ENCODE measurements at regions of chr21 and their contacts with region 1.

Region 1: DNA sequence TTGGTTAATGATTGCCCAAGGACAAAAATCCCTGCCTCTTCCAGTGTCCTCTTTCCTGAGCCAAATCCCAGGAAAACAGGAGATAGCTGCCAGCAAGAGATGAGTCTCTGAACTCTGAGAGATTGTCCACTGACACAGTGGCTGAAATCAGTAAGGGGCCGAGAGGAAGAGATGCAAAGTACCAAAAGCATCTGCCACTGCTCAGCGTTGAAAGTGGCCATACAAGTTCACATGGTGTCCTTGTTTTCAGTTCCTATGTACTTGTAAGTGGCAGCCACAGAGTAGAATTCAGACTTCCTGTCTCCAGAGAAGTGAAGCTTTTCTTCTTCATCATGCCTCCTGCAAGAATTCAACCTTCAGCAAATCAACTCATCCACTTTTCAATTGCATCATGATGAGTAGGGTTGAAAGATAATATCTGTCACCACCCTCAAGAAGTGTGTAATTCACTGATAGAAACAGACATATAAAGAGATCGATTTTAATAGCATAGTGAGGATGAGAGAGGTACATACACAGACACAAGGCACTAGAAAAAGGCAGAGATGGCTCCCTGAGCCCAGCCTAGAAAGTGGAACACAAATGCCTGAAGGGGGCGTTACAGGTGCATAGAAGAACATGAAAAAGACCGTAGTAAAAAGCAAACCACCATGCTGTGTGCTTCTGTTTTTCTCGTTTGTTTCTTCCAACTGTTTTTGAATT is 185.8 kb downstream of the MRPL39 start:
- DNase-seq: no peak
- ATAC-seq: peak; percentile 81
- H3K4me3 Mint-ChIP-seq: peak overlapping the region; percentile 68
- H3K27ac Mint-ChIP-seq: peak overlapping the region; percentile 91
- H3K4me1 Mint-ChIP-seq: peaks cover 63% of the 10 kb centered on the region
- H3K27me3 Mint-ChIP-seq: no peaks in the 10 kb centered on the region
- CTCF ChIP-seq: peak; percentile 65

Region 2: GRCh38 chr21:25024639-25025038 is 396.8 kb before region 1 on chr21:
- CTCF ChIA-PET with region 1: no interaction called
- POLR2A ChIA-PET with region 1: no interaction called
- intact Hi-C with region 1: no loop called
- DNase-seq: no peak
- ATAC-seq: no peak
- H3K4me3 Mint-ChIP-seq: no peak overlapping the region
- H3K27ac Mint-ChIP-seq: no peak overlapping the region
- H3K4me1 Mint-ChIP-seq: no peaks in the 10 kb centered on the region
- H3K27me3 Mint-ChIP-seq: no peaks in the 10 kb centered on the region
- CTCF ChIP-seq: no peak

Region 3: GRCh38 chr21:25188677-25189079 is 232.8 kb before region 1 on chr21:
- CTCF ChIA-PET with region 1: no interaction called
- POLR2A ChIA-PET with region 1: no interaction called
- intact Hi-C with region 1: loop called (anchors 1 kb)
- DNase-seq: no peak
- ATAC-seq: peak; percentile 72
- H3K4me3 Mint-ChIP-seq: peak overlapping the region; percentile 44
- H3K27ac Mint-ChIP-seq: peak overlapping the region; percentile 73
- H3K4me1 Mint-ChIP-seq: peaks cover 68% of the 10 kb centered on the region
- H3K27me3 Mint-ChIP-seq: no peaks in the 10 kb centered on the region
- CTCF ChIP-seq: no peak

Region 4: GRCh38 chr21:25350056-25350455 is 71.4 kb before region 1 on chr21:
- CTCF ChIA-PET with region 1: no interaction called
- POLR2A ChIA-PET with region 1: no interaction called
- intact Hi-C with region 1: no loop called
- DNase-seq: no peak
- ATAC-seq: no peak
- H3K4me3 Mint-ChIP-seq: no peak overlapping the region
- H3K27ac Mint-ChIP-seq: no peak overlapping the region
- H3K4me1 Mint-ChIP-seq: peaks cover 4% of the 10 kb centered on the region
- H3K27me3 Mint-ChIP-seq: no peaks in the 10 kb centered on the region
- CTCF ChIP-seq: no peak

Region 5: GRCh38 chr21:25487046-25487594 is 65.6 kb after region 1 on chr21:
- CTCF ChIA-PET with region 1: interaction called, 3 read pairs
- POLR2A ChIA-PET with region 1: interaction called, 28 read pairs
- intact Hi-C with region 1: loop called (anchors 1 kb)
- DNase-seq: no peak
- ATAC-seq: peak; percentile 85
- H3K4me3 Mint-ChIP-seq: peak overlapping the region; percentile 49
- H3K27ac Mint-ChIP-seq: peak overlapping the region; percentile 90
- H3K4me1 Mint-ChIP-seq: peaks cover 73% of the 10 kb centered on the region
- H3K27me3 Mint-ChIP-seq: no peaks in the 10 kb centered on the region
- CTCF ChIP-seq: no peak

Region 6: GRCh38 chr21:25568246-25568645 is 146.8 kb after region 1 on chr21:
- CTCF ChIA-PET with region 1: interaction called, 18 read pairs
- POLR2A ChIA-PET with region 1: interaction called, 157 read pairs
- intact Hi-C with region 1: loop called (anchors 1 kb)
- DNase-seq: no peak
- ATAC-seq: no peak
- H3K4me3 Mint-ChIP-seq: peak overlapping the region; percentile 73
- H3K27ac Mint-ChIP-seq: peak overlapping the region; percentile 59
- H3K4me1 Mint-ChIP-seq: peaks cover 91% of the 10 kb centered on the region
- H3K27me3 Mint-ChIP-seq: no peaks in the 10 kb centered on the region
- CTCF ChIP-seq: no peak

Region 7: GRCh38 chr21:25607151-25608043 is 185.9 kb after region 1 on chr21 and contains the start of gene MRPL39:
- CTCF ChIA-PET with region 1: interaction called, 7 read pairs
- POLR2A ChIA-PET with region 1: interaction called, 5 read pairs
- intact Hi-C with region 1: loop called (anchors 1 kb)
- DNase-seq: peak; percentile 85
- ATAC-seq: peak; percentile 89
- H3K4me3 Mint-ChIP-seq: peak within 1 kb of the TSS; percentile 100
- H3K27ac Mint-ChIP-seq: peak within 1 kb of the TSS; percentile 99
- H3K4me1 Mint-ChIP-seq: peaks cover 35% of the 10 kb centered on the region
- H3K27me3 Mint-ChIP-seq: no peaks in the 10 kb centered on the region
- CTCF ChIP-seq: no peak
- total RNA-seq, gene MRPL39: 43.6 and 46.3 TPM in 2 replicates

Region 8: DNA sequence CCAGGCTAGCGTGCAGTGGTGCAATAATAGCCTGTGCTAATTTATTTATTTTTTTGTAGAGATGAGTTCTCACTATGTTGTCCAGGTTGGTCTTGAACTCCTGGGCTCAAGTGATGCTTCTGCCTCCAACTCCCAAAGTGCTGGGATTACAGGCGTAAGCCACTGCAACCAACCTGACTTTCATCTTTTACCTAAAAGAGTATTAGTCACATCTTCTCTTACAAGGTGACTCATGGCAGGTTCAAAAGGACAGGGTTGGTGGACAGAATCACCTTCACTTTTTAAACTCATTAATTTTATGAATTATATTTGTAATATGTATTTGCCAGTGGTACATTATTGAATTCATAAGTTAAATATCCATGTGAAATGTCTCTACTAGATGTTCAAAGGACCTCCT is 235.7 kb after region 1 on chr21:
- CTCF ChIA-PET with region 1: no interaction called
- POLR2A ChIA-PET with region 1: no interaction called
- intact Hi-C with region 1: no loop called
- DNase-seq: no peak
- ATAC-seq: no peak
- H3K4me3 Mint-ChIP-seq: no peak overlapping the region
- H3K27ac Mint-ChIP-seq: no peak overlapping the region
- H3K4me1 Mint-ChIP-seq: no peaks in the 10 kb centered on the region
- H3K27me3 Mint-ChIP-seq: no peaks in the 10 kb centered on the region
- CTCF ChIP-seq: no peak

Region 9: GRCh38 chr21:25734904-25735645 is 313.6 kb after region 1 on chr21 and contains the starts of genes ATP5PF and GABPA:
- CTCF ChIA-PET with region 1: interaction called, 3 read pairs
- POLR2A ChIA-PET with region 1: no interaction called
- intact Hi-C with region 1: loop called (anchors 1 kb)
- DNase-seq: peak; percentile 98
- ATAC-seq: peak; percentile 87
- H3K4me3 Mint-ChIP-seq: peak within 1 kb of the TSS; percentile 100
- H3K27ac Mint-ChIP-seq: peak within 1 kb of the TSS; percentile 100
- H3K4me1 Mint-ChIP-seq: peaks cover 61% of the 10 kb centered on the region
- H3K27me3 Mint-ChIP-seq: no peaks in the 10 kb centered on the region
- CTCF ChIP-seq: no peak
- total RNA-seq, gene ATP5PF: 73.9 and 78.3 TPM in 2 replicates
- total RNA-seq, gene GABPA: 31.3 and 34.6 TPM in 2 replicates